Sciatic nerve (tissue), 2 donors: ENCODE measurements at regions of chr1 and their contacts with region 1.

Region 1: GRCh38 chr1:175033953-175034352 is 10.7 kb upstream of the MRPS14 start:
- DNase-seq: no peak
- ATAC-seq: no peak

Region 2: GRCh38 chr1:174839211-174839610 is 194.7 kb before region 1 on chr1:
- intact Hi-C with region 1: no loop called
- DNase-seq: no peak
- ATAC-seq: no peak

Region 3: DNA sequence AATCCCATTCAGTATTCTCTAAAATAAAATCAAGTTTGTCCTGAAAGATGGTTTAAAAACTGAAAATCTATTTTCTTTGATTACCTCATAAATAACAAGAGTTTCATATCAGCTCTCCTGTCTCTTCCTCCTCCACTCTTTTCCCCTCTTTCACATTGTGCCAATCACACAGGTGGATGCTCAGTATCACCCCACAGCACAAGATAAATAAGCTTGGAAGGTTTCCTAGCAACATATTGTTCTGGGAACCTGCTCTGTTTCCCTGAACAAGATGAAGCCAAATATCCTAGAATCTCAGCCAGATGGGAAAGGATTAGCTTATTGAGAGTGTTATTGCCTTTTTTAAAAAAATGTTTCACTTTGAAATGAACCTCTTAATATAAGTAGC is 79.9 kb before region 1 on chr1:
- intact Hi-C with region 1: no loop called
- DNase-seq: no peak
- ATAC-seq: peak; percentile 80

Region 4: GRCh38 chr1:175129997-175130648 is 96.2 kb after region 1 on chr1:
- intact Hi-C with region 1: loop called (anchors 5 kb)
- DNase-seq: no peak
- ATAC-seq: peak; percentile 37